ENCODE measurements at regions of chr16 and their contacts with region 1.

Region 1: DNA sequence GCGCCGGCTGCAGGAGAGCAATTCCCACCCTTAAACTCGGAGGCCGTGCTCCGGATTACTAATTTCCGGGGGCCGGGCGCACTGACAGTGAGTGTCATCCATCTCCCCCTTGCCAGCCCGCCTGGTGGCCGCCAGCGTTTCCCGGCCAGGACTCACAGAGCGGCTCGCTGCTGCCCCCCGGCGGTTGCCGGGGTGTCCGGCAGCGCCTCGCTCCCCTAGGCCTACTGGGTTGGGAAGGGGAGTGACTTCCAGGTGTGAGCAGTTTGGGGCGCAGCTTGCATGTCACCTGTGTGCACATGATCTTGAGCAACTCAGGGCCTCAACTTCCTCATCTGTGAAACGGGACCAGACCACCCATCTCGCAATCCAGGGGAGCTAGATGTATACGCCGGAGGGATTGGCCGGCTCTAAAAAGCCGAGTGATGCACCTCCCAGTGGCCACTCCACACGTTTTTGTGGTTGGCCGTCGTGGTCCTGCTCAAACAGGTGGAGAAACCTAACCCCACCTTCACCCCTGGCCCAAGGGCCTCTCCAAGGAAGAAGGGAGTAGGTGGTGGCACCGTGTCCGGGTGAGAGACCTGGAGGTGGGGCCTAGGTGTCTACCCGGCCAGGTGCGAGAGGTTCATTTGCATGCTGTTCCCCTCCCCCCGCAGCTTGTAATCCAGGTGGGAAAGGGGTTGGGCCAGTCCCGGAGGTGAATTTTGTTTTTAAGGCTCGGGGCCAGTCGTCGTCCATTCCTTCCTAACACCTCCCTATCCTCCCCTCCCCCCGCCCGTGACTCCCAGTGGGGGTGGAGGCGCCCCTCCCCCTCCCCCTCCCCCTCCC is 2.4 kb upstream of the GSE1 start:
- DNase-seq: peak; percentile 76 to 92 (median 84)
- H3K4me3 ChIP-seq: peak overlapping the region; percentile 52 to 79 (median 70)
- H3K27ac ChIP-seq: peak overlapping the region in 46 of 59 donors; percentile 59 to 93 (median 82)
- H3K27me3 ChIP-seq: no peaks in the 10 kb centered on the region
- CTCF ChIP-seq: peak; percentile 78 to 100 (median 99)

Region 2: DNA sequence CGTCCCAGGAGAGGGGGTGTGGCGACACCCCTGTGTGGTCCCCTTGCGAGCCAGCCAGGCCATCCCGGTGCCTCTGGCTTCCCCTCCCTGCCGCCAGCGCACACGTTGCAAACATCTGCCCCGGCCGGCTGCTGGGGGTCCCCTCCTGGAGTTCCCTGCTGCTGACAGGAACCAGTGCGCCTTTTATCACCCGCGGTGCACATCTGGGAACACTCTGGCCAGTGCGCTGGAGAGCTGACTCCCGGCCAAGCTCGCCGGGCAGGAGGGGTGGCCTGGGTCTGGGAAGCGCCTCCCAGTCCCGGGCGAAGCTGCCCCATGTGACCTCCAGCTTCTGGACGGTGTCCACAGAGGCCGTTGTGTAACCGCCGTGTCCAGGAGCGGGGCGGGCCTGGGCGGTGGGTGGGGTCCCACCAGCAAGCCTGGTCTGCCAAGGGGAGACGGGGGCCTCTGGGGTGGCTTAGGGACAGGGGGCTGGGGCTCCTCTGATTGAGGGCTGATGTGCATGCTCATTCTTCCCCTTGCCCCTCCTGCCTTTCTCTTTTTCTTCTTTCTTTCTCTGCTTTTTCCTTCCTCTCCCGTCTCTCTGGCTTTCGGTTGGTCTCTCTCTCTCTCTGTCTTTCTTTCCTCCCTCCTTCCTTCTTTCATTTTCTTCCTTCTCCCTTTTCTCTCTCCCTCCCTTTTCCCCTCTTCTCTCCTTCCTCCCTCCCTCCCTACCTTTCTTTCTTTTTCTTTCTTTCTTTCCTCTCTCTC is 473.2 kb before region 1 on chr16:
- intact Hi-C with region 1: loop called in 1 of 2 experiments (anchors 10 kb)
- DNase-seq: peak; percentile 60 to 91 (median 86)
- H3K4me3 ChIP-seq: peak overlapping the region in 56 of 59 donors; percentile 6 to 65 (median 40)
- H3K27ac ChIP-seq: peak overlapping the region in 47 of 59 donors; percentile 11 to 80 (median 60)
- H3K27me3 ChIP-seq: no peaks in the 10 kb centered on the region
- CTCF ChIP-seq: peak in 21 of 56 donors; percentile 10 to 51 (median 21)

Region 3: DNA sequence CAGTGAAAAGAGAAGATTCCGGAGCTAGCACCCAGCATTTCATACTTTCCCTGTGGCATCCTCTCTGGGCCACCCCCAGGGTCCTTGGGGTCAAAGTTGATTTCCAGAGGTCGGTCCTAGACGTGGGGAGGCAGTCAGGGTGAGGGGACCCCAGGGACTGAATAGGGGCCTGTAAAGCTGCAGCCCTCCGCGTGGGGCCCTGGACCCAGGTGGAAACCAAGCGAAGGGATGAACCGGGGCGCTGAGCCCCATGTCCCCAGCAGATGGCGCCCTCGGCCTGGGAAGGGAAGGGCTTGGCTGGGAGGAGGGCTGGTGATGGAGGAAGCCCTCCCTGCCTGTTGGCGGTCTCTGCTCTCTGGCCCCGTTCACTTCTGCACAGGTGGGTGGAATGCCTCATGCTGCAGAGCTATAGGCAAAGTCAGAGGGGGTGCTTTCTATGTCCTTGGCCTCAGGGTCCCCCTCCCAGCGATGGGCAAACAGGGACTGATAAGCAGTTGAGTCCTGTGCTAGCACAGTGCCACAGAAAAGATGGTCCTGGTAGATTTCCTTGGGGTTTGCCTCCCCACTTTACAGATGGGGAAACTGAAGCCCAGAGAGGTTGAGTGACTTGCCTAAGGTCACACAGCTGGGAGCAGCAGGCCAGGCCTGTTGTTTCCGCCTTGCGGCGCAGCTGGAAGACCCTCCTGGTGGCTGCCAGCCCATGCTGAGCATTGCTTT is 335.0 kb before region 1 on chr16:
- intact Hi-C with region 1: loop called (anchors 2 to 5 kb)
- DNase-seq: peak in 9 of 10 donors; percentile 66 to 91 (median 77)
- H3K4me3 ChIP-seq: no peak overlapping the region
- H3K27ac ChIP-seq: peak overlapping the region in 2 of 59 donors; percentile 12 to 54
- H3K27me3 ChIP-seq: no peaks in the 10 kb centered on the region
- CTCF ChIP-seq: peak; percentile 62 to 98 (median 95)

Region 4: GRCh38 chr16:85296859-85297660 is 313.7 kb before region 1 on chr16:
- intact Hi-C with region 1: loop called in 1 of 2 experiments (anchors 5 kb)
- DNase-seq: peak in 1 of 10 donors; percentile 70
- H3K4me3 ChIP-seq: no peak overlapping the region
- H3K27ac ChIP-seq: peak overlapping the region in 1 of 59 donors; percentile 10
- H3K27me3 ChIP-seq: no peaks in the 10 kb centered on the region
- CTCF ChIP-seq: peak in 55 of 56 donors; percentile 41 to 84 (median 69)

Region 5: GRCh38 chr16:85420501-85421337 is 190.0 kb before region 1 on chr16:
- intact Hi-C with region 1: loop called (anchors 5 kb)
- DNase-seq: peak in 6 of 10 donors; percentile 8 to 55 (median 30)
- H3K4me3 ChIP-seq: no peak overlapping the region
- H3K27ac ChIP-seq: no peak overlapping the region
- H3K27me3 ChIP-seq: peaks cover 0 to 4% (median 0%) of the 10 kb centered on the region in 45 donors
- CTCF ChIP-seq: peak; percentile 49 to 97 (median 88)

Region 6: DNA sequence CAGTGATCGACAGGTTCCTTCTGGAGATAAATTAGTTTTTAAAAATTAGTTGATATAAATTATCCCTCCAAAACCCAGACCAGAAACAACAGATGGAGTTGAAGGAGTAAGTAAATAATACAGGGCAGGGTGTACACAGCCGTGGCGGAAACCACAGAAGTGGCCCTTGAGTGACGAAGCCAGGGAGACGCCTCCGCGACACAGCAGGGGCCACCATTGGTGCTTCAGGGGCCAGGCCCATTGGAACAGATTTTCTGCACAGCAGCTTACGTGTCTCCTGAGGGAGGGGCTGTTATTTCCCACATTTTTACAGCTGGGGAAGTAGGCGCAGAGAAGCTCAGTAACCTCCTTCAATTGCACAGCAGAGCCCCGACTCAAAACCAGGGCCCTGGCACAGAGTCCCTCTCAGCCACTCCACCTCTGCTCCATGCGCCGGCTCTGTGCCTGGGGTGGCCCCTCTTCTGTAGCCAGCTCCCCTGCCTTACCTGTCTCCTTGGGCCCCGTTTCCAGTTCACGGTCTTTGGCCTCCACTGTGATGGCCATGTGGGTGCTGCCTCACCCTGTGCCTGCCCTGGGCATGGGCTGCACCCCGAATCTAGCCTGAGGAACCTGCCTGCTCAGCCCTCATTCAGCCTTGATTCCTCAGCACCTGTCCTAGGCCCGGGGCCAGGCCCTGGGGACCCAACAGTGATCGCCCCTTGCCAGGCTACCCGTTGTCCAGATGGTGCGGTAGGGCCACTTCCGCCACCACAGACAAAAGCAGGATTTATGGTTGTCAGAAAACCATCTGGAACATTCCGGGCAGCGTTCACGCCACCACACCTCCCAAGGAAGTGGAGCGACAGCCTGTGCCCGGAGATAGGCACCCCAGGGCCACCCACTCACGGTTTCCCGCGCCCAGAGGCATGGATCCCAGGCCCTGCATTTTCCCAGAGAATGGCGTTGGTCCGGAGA is 126.1 kb before region 1 on chr16:
- intact Hi-C with region 1: loop called in 1 of 2 experiments (anchors 5 kb)
- DNase-seq: peak in 1 of 10 donors; percentile 53
- H3K4me3 ChIP-seq: no peak overlapping the region
- H3K27ac ChIP-seq: peak overlapping the region in 26 of 59 donors; percentile 12 to 73 (median 34)
- H3K27me3 ChIP-seq: no peaks in the 10 kb centered on the region
- CTCF ChIP-seq: no peak

Region 7: DNA sequence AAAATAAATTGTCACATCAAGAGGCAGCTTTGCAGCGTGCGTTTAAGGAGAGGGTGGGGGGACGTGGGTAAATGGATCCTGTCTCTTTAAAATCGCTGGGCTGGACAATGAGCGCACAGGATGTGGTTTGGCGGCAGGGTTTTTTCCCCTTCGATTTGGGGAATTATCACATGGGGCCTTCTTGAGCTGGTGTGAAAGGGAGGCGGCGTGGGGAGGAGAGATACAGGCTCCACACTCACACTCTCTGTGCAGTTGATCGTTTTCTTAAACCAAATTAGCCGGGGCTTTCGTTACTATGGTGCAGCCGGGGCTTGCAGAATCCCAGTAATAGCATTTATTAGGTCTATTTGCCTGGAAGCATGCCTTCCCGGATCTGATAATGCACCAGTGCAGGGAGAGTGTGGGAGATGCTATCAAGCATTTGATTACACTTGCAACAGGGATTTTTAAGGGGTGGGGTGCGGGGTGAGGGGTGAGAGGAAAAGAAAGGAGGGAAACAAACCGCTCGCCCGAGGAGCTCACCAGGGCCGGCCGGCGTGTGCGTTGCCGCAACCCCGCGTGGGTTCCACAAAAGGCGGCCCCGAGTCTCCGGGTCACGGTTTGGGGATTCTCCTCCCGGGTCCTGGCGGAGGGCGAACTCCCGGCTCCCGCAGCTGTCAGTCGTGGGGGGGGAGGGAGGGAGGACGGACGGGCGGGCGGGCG is 56.5 kb before region 1 on chr16:
- intact Hi-C with region 1: loop called (anchors 2 to 5 kb)
- DNase-seq: peak in 8 of 10 donors; percentile 63 to 77 (median 68)
- H3K4me3 ChIP-seq: peak overlapping the region; percentile 55 to 89 (median 76)
- H3K27ac ChIP-seq: peak overlapping the region; percentile 15 to 95 (median 85)
- H3K27me3 ChIP-seq: no peaks in the 10 kb centered on the region
- CTCF ChIP-seq: no peak